Caco-2 (cell line): ENCODE measurements at regions of chr12 and their contacts with region 1.

Region 1: DNA sequence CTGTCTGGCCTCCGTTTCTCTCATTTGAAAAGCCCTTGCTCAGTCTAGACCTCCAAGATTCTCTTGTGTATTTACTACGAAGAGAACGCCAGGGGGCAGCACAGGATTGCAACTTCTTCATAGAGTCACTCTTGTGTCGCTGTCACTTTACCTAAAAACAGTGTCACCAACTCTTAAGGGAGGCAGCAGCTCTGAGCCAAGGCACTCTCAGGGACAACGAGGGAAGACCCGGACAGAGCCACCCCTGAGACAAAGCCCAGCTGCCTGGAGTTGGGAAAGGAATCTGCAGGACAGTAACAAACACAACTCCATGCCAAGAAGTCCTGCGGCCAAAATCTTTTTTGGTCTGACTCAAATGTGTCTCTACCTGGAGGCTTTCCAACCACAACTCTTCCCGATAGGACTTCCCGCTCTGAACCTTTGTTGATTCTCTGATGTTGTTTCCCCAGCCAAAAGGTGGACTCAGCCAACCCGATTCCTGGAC is 9.6 kb upstream of the RPAP3 start:
- DNase-seq: peak; percentile 79 to 81
- H3K4me3 ChIP-seq: no peak overlapping the region
- H3K4me3 Mint-ChIP-seq: no peak overlapping the region
- H3K27ac Mint-ChIP-seq: no peak overlapping the region
- H3K4me1 ChIP-seq: no peaks in the 10 kb centered on the region
- H3K4me1 Mint-ChIP-seq: no peaks in the 10 kb centered on the region
- H3K27me3 ChIP-seq: no peaks in the 10 kb centered on the region
- H3K27me3 Mint-ChIP-seq: no peaks in the 10 kb centered on the region
- CTCF ChIP-seq: peak; percentile 88 to 92

Region 2: GRCh38 chr12:47758834-47759690 is 43.6 kb after region 1 on chr12 and contains the start of gene RAPGEF3:
- CTCF ChIA-PET with region 1: interaction called, 5 read pairs
- POLR2A ChIA-PET with region 1: no interaction called
- intact Hi-C with region 1: loop called (anchors 1 kb)
- DNase-seq: peak; percentile 85 to 90
- H3K4me3 ChIP-seq: peak within 1 kb of the TSS; percentile 52
- H3K4me3 Mint-ChIP-seq: peak within 1 kb of the TSS; percentile 80
- H3K27ac Mint-ChIP-seq: peak within 1 kb of the TSS; percentile 56
- H3K4me1 ChIP-seq: peaks cover 18% of the 10 kb centered on the region
- H3K4me1 Mint-ChIP-seq: peaks cover 10% of the 10 kb centered on the region
- H3K27me3 ChIP-seq: no peaks in the 10 kb centered on the region
- H3K27me3 Mint-ChIP-seq: no peaks in the 10 kb centered on the region
- CTCF ChIP-seq: peak; percentile 82 to 85
- total RNA-seq, gene RAPGEF3: 1.2 and 2.3 TPM in 2 replicates

Region 3: DNA sequence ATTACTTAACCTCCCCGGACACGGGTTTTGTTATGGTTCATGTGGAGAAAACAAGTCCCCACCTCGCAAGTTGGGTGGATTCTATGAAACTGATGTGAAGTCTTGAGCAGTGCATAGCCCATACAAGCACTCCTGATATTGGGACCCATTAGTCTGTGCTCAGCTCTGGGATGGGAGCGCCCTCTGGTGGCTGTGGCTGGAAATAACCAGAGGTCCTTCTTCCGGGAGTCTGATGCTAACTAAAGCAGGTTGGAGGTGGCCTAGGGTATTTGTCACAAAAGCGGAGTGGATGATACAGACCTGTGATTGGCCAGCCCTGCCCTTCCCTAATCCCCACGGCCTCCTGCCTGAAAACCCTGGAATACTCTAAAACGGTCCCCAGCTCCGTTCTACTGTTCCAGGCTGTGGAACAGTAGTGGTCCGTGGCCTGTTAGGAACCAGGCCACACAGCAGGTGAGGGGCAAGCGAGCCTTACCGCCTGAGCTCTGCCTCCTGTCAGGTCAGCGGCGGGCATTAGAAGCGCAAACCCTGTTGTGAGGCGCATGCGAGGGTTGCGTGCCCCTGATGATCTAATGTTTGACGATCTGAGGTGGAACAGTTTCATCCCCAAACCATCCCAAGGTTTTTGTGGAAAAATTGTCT is 64.0 kb after region 1 on chr12:
- CTCF ChIA-PET with region 1: interaction called, 3 read pairs
- POLR2A ChIA-PET with region 1: no interaction called
- intact Hi-C with region 1: loop called (anchors 1 kb)
- DNase-seq: peak; percentile 88 to 94
- H3K4me3 ChIP-seq: no peak overlapping the region
- H3K4me3 Mint-ChIP-seq: no peak overlapping the region
- H3K27ac Mint-ChIP-seq: peak overlapping the region; percentile 34
- H3K4me1 ChIP-seq: peaks cover 9% of the 10 kb centered on the region; the same call in 1 of the 2 replicates
- H3K4me1 Mint-ChIP-seq: peaks cover 19% of the 10 kb centered on the region
- H3K27me3 ChIP-seq: no peaks in the 10 kb centered on the region
- H3K27me3 Mint-ChIP-seq: no peaks in the 10 kb centered on the region
- CTCF ChIP-seq: peak; percentile 97 to 99